ENCODE measurements at regions of chr1 and their contacts with region 1.

Region 1: DNA sequence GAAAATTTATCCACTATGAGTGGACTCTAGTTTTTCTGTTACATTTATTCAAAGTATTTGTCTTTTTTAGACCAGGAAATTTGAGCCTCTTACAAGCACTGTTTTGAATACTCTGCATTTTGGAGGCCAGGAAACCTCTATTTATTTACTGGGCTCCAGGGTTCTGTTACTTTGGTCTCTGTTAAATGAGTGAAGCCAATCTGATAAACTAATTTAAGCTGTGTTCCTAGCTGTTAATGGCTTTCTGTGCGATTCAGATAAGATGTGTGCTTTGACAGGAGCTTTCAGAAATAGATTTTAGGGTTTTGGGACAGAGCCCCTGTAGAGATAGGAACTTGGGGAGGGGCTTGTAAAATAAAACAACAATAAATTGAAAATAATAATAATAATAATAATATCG is 23.9 kb downstream of the ACKR1 start:
- DNase-seq: no peak
- ATAC-seq: no peak
- H3K4me3 ChIP-seq: no peak overlapping the region
- H3K27ac ChIP-seq: no peak overlapping the region
- H3K4me1 ChIP-seq: no peaks in the 10 kb centered on the region
- H3K27me3 ChIP-seq: no peaks in the 10 kb centered on the region
- CTCF ChIP-seq: no peak

Region 2: GRCh38 chr1:159250638-159251216 is 22.2 kb after region 1 on chr1:
- CTCF ChIA-PET with region 1: no interaction called
- POLR2A ChIA-PET with region 1: no interaction called
- in situ Hi-C with region 1: no loop called
- intact Hi-C with region 1: no loop called
- DNase-seq: no peak
- ATAC-seq: no peak
- H3K4me3 ChIP-seq: no peak overlapping the region
- H3K27ac ChIP-seq: no peak overlapping the region
- H3K4me1 ChIP-seq: no peaks in the 10 kb centered on the region
- H3K27me3 ChIP-seq: no peaks in the 10 kb centered on the region
- CTCF ChIP-seq: no peak

Region 3: DNA sequence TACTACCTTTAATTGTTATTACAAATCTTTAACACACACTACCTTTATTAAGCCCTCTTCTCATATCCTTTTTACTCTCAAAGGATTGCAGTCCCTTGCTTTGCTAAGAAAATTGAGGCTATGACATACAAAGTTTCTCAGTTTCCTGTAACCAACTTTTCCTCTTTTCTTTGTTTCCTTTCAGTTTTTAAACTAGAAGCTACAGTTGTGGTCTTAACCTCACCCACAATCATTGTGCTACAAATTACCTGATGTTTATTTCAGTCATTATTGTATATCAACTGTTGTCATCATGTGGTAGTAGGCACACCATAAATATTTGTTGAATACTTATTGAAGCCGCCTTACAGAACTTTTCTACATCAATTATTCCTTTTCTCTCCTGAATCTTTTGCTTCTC is 1242.7 kb after region 1 on chr1:
- CTCF ChIA-PET with region 1: no interaction called
- POLR2A ChIA-PET with region 1: interaction called, 10 read pairs
- in situ Hi-C with region 1: no loop called
- intact Hi-C with region 1: no loop called
- DNase-seq: no peak
- ATAC-seq: no peak
- H3K4me3 ChIP-seq: no peak overlapping the region
- H3K27ac ChIP-seq: no peak overlapping the region
- H3K4me1 ChIP-seq: no peaks in the 10 kb centered on the region
- H3K27me3 ChIP-seq: peaks cover 25% of the 10 kb centered on the region
- CTCF ChIP-seq: no peak